CD14-positive monocyte (primary cell): ENCODE measurements at regions of chrX and their contacts with region 1.

Region 1: GRCh38 chrX:119067023-119067739 is 5.6 kb upstream of the CT47C1 start:
- DNase-seq: peak; percentile 37 to 56 (median 49)
- H3K4me3 ChIP-seq: no peak overlapping the region
- H3K4me3 Mint-ChIP-seq: no peak overlapping the region
- H3K27ac ChIP-seq: no peak overlapping the region
- H3K27ac Mint-ChIP-seq: no peak overlapping the region
- H3K4me1 ChIP-seq: peaks cover 0 to 8% of the 10 kb centered on the region in 2 donors
- H3K4me1 Mint-ChIP-seq: peaks cover 11% of the 10 kb centered on the region
- H3K27me3 ChIP-seq: no peaks in the 10 kb centered on the region
- H3K27me3 Mint-ChIP-seq: peaks cover 0 to 3% (median 1%) of the 10 kb centered on the region in 3 donors
- CTCF ChIP-seq: peak; percentile 68

Region 2: DNA sequence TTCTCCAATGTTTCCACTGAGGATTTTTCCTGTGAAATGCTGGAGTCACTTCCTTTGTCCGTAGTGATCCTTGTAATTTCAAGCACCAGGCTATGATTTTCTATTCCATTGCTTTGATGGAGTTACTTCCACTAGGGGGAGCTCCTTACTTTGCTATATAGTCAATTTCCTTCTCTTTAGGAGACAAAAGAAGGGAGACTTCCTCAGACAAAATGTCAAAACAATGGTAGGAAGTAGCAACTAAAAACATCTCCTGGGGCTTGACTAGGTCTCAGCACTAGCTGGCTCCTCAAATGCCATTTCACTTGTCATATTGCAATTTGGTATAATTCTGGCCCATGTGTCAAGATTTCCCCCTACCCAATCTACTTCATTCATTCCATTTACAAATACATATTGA is 219.5 kb before region 1 on chrX:
- intact Hi-C with region 1: loop called (anchors 2 to 10 kb)
- DNase-seq: peak; percentile 27 to 51 (median 46)
- H3K4me3 ChIP-seq: no peak overlapping the region
- H3K4me3 Mint-ChIP-seq: no peak overlapping the region
- H3K27ac ChIP-seq: no peak overlapping the region
- H3K27ac Mint-ChIP-seq: no peak overlapping the region
- H3K4me1 ChIP-seq: no peaks in the 10 kb centered on the region
- H3K4me1 Mint-ChIP-seq: no peaks in the 10 kb centered on the region
- H3K27me3 ChIP-seq: no peaks in the 10 kb centered on the region
- H3K27me3 Mint-ChIP-seq: peaks cover 0 to 7% (median 2%) of the 10 kb centered on the region in 3 donors
- CTCF ChIP-seq: peak; percentile 64

Region 3: DNA sequence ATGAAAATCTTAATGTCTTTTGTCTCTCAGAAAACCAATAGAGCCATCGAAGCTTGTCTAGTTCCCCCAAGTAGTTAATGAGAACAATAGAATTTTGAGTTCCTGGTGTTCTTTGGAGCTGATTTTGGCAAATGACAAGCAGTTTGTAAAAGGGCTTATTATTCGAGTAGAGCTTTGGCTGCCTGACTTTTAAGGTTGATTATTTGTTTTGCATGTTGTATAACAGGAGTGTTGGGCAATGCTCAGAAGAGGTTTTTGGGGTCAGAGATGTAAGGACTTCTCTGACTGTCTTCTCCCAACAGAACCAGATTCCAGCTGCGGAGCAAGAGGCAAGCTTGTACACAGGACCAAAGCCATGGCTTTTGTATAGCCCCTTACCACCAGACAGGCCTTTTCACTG is 213.6 kb before region 1 on chrX:
- intact Hi-C with region 1: loop called in 1 of 2 experiments (anchors 10 kb)
- DNase-seq: no peak
- H3K4me3 ChIP-seq: no peak overlapping the region
- H3K4me3 Mint-ChIP-seq: no peak overlapping the region
- H3K27ac ChIP-seq: no peak overlapping the region
- H3K27ac Mint-ChIP-seq: no peak overlapping the region
- H3K4me1 ChIP-seq: no peaks in the 10 kb centered on the region
- H3K4me1 Mint-ChIP-seq: no peaks in the 10 kb centered on the region
- H3K27me3 ChIP-seq: no peaks in the 10 kb centered on the region
- H3K27me3 Mint-ChIP-seq: peaks cover 2% of the 10 kb centered on the region in 3 donors
- CTCF ChIP-seq: no peak

Region 4: DNA sequence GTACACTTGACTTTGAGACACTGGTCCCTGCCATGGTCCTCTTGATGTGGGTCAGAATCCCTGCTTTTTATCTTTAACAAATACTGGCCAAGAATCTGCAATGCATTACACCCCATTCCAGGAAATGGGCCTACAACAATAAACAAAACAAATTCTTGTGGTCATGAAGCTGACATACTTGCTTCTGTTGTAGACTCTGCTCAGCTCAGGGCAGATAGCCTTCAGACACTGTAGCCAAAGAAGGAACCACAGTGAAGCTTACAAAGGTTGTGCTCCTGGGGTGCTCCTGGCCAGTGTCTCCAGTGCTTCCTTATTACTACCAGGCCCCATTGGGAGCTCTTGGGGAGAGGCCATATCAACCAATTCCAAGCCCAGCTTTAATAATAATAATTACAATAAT is 38.6 kb after region 1 on chrX:
- intact Hi-C with region 1: no loop called
- DNase-seq: no peak
- H3K4me3 ChIP-seq: no peak overlapping the region
- H3K4me3 Mint-ChIP-seq: no peak overlapping the region
- H3K27ac ChIP-seq: no peak overlapping the region
- H3K27ac Mint-ChIP-seq: no peak overlapping the region
- H3K4me1 ChIP-seq: no peaks in the 10 kb centered on the region
- H3K4me1 Mint-ChIP-seq: no peaks in the 10 kb centered on the region
- H3K27me3 ChIP-seq: no peaks in the 10 kb centered on the region
- H3K27me3 Mint-ChIP-seq: no peaks in the 10 kb centered on the region
- CTCF ChIP-seq: no peak